MCF 10A (cell line): ENCODE measurements at regions of chr5 and their contacts with region 1.

Region 1: DNA sequence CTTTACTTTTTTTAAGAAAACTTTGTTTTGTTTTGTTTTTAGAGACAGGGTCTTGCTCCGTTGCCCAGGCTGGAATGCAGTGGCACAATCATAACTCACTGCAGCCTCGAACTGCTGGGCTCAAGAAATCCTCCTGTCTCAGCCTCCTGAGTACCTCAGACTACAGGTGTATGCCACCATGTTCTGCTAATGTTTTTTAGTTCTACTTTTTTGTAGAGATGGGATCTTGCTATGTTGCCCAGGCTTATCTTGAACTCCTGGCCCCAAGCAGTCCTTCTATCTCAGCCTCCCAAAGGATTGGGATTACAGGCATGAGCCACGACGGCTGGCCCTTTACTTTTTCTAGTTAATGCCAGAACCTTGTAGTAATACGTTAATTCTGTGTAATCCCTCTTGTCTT is 36.0 kb downstream of the IPO11 start:
- DNase-seq: no peak
- H3K4me3 Mint-ChIP-seq: no peak overlapping the region
- H3K27ac Mint-ChIP-seq: no peak overlapping the region
- H3K4me1 Mint-ChIP-seq: no peaks in the 10 kb centered on the region
- H3K27me3 Mint-ChIP-seq: no peaks in the 10 kb centered on the region
- CTCF ChIP-seq: no peak

Region 2: GRCh38 chr5:62424763-62425162 is 23.8 kb before region 1 on chr5:
- CTCF ChIA-PET with region 1: interaction called, 10 read pairs
- POLR2A ChIA-PET with region 1: no interaction called
- intact Hi-C with region 1: no loop called
- DNase-seq: no peak
- H3K4me3 Mint-ChIP-seq: no peak overlapping the region
- H3K27ac Mint-ChIP-seq: no peak overlapping the region
- H3K4me1 Mint-ChIP-seq: peaks cover 11% of the 10 kb centered on the region
- H3K27me3 Mint-ChIP-seq: no peaks in the 10 kb centered on the region
- CTCF ChIP-seq: no peak

Region 3: GRCh38 chr5:62431735-62432620 is 16.6 kb before region 1 on chr5:
- CTCF ChIA-PET with region 1: interaction called, 15 read pairs
- POLR2A ChIA-PET with region 1: interaction called, 3 read pairs
- intact Hi-C with region 1: no loop called
- DNase-seq: no peak
- H3K4me3 Mint-ChIP-seq: no peak overlapping the region
- H3K27ac Mint-ChIP-seq: no peak overlapping the region
- H3K4me1 Mint-ChIP-seq: peaks cover 14% of the 10 kb centered on the region
- H3K27me3 Mint-ChIP-seq: no peaks in the 10 kb centered on the region
- CTCF ChIP-seq: no peak

Region 4: DNA sequence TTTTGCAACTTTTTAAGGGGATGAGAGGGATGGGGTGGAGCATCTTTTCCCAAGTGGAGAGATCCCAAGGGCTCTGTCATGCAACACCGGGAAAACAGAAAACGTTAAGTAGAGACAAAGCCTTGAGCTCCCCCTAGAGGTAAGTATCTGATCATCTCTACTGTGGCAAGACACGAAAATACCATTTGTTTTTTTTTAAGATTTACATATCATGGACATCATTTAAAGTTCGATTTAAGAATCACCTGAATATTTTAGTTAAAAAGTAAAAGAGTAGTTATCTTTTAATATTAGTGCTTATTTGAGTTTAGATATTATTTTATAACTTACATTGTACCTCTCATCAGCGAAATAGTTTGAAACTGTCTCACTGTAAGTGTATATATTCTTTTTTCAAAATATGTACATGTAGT is 330.5 kb after region 1 on chr5:
- CTCF ChIA-PET with region 1: interaction called, 4 read pairs
- POLR2A ChIA-PET with region 1: no interaction called
- intact Hi-C with region 1: loop called (anchors 1 kb)
- DNase-seq: peak; percentile 69
- H3K4me3 Mint-ChIP-seq: no peak overlapping the region
- H3K27ac Mint-ChIP-seq: no peak overlapping the region
- H3K4me1 Mint-ChIP-seq: no peaks in the 10 kb centered on the region
- H3K27me3 Mint-ChIP-seq: no peaks in the 10 kb centered on the region
- CTCF ChIP-seq: peak; percentile 61